ENCODE measurements at regions of chr4 and their contacts with region 1.

Region 1: DNA sequence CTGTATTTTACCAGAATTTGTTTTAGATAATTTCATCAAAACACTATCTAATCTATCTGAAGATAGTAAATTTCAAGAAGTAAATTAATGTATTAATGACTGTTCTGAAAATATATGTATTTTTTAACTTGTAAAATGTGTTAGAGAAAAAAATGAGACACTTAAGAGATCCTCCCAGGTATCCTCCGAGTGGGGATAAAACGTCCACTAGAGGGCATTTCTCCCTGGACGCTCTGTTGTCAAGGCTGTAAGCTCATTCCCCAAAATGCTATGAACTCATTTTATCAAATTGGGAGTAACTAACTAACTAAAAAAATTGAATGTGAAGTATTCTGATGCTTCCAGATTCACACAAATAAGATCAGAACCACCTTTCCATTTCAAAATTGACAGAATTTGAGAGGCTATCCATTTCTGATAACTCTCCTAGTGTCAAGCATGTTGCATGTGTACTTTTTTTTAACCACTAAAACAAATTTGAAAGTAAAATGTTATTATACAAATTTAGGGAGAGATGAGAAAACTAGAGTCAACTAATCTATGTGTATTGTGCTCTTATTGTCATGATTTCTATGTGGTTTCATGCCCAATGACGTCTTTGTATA is 337.3 kb upstream of the HS3ST1 start:
- DNase-seq: no peak

Region 2: GRCh38 chr4:10587697-10588096 is 1178.3 kb before region 1 on chr4:
- intact Hi-C with region 1: loop called in 1 of 2 experiments (anchors 5 kb)
- DNase-seq: no peak

Region 3: GRCh38 chr4:11782859-11783258 is 16.9 kb after region 1 on chr4:
- intact Hi-C with region 1: no loop called
- DNase-seq: no peak